ENCODE measurements at regions of chr7 and their contacts with region 1.

Region 1: DNA sequence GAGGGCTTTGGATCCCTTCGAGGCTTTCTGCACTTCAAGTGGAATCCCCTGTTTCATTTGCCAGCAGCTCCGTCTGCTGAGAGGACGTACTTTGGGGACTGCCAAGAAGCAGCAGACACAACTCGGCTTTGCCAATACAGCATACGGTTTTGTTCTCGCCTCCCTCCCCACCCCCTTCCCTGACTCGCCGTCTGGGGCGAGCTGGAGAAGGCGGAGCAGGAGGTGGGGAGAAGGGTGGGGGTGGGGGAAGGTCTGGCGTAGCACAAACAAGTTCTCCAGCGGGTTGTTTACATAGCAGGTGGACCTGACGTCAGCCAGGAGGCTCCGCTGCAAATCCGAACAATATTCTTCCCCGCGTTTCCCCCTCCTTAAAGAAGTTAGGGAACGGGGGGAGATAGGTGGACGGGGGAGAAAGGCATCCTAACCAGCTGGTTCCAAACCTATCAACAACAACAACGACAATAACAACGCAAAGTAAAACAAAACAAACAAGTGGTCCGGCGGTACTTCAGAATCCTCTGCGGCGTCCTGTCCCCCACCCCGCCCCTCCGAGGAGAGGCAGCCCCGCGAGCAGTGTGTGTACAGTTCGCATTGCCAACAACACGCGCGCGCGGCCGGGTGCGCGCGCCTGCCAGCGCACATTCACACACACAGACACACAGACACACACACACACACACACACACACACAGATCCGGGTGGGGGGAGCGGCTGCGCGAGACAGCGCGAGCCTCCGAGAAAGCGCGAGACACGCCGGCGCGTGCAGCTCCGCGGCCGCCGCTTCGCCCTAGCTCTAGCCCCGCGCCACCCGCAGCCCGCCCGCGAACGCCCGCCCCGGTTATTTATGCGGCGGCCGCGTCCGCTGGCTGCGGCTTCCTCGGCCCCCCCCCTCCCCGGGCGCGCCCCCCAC is 167.0 kb upstream of the PPP1R3A start:
- DNase-seq: peak; percentile 40
- H3K4me3 Mint-ChIP-seq: peak overlapping the region; percentile 76
- H3K27ac Mint-ChIP-seq: no peak overlapping the region
- H3K4me1 Mint-ChIP-seq: peaks cover 40% of the 10 kb centered on the region
- H3K27me3 Mint-ChIP-seq: peaks cover 64% of the 10 kb centered on the region

Region 2: DNA sequence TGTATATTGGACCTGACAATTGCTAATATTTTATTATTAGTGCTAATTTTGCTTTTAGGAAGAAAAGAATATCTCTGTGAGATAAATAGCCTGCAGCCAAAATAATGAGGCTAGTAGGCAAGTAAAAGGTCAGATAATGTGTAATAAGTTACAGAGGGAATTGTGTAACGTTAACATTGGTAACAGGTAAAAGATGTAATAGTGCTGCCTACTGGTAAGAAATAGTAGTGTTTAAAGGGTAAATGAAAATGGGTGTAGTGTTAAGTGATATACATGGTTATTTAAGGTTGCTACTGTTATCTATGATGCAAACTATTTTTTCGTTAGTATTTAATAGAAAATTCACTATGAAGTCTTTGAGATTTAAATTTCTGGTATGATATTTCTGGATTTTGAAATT is 319.6 kb after region 1 on chr7:
- CTCF ChIA-PET with region 1: no interaction called
- intact Hi-C with region 1: loop called (anchors 1 kb)
- DNase-seq: no peak
- H3K4me3 Mint-ChIP-seq: no peak overlapping the region
- H3K27ac Mint-ChIP-seq: no peak overlapping the region
- H3K4me1 Mint-ChIP-seq: no peaks in the 10 kb centered on the region
- H3K27me3 Mint-ChIP-seq: no peaks in the 10 kb centered on the region

Region 3: GRCh38 chr7:114799628-114800028 is 713.8 kb after region 1 on chr7:
- CTCF ChIA-PET with region 1: no interaction called
- intact Hi-C with region 1: loop called (anchors 5 kb)
- DNase-seq: peak; percentile 39
- H3K4me3 Mint-ChIP-seq: no peak overlapping the region
- H3K27ac Mint-ChIP-seq: peak overlapping the region; percentile 81
- H3K4me1 Mint-ChIP-seq: peaks cover 70% of the 10 kb centered on the region
- H3K27me3 Mint-ChIP-seq: peaks cover 13% of the 10 kb centered on the region

Region 4: GRCh38 chr7:115217373-115217772 is 1131.5 kb after region 1 on chr7:
- CTCF ChIA-PET with region 1: no interaction called
- intact Hi-C with region 1: loop called (anchors 2 kb)
- DNase-seq: no peak
- H3K4me3 Mint-ChIP-seq: no peak overlapping the region
- H3K27ac Mint-ChIP-seq: no peak overlapping the region
- H3K4me1 Mint-ChIP-seq: peaks cover 10% of the 10 kb centered on the region
- H3K27me3 Mint-ChIP-seq: no peaks in the 10 kb centered on the region

Region 5: DNA sequence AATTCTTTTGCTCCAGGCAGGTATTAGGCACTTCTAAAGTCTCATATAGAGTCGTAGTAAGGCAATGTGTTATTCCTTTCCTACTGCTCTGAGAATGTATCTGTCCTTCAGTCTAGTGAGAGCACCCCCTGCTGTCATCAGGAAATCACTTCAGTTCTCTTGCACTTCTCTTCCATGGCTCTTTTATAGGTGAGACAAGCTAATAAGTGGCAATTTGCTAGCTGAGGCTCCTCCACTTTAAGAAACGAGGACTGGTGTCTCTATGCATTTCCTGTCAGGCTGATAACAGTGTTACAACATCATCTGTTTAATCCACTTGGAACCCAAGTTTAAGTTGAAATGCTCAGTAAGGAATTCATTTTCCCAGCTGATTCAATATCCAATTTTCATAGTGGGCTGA is 1594.1 kb after region 1 on chr7:
- CTCF ChIA-PET with region 1: no interaction called
- intact Hi-C with region 1: loop called (anchors 1 kb)
- DNase-seq: peak; percentile 6
- H3K4me3 Mint-ChIP-seq: no peak overlapping the region
- H3K27ac Mint-ChIP-seq: no peak overlapping the region
- H3K4me1 Mint-ChIP-seq: no peaks in the 10 kb centered on the region
- H3K27me3 Mint-ChIP-seq: no peaks in the 10 kb centered on the region

Region 6: GRCh38 chr7:115851291-115851690 is 1765.4 kb after region 1 on chr7:
- CTCF ChIA-PET with region 1: interaction called, 3 read pairs
- intact Hi-C with region 1: loop called (anchors 1 kb)
- DNase-seq: no peak
- H3K4me3 Mint-ChIP-seq: no peak overlapping the region
- H3K27ac Mint-ChIP-seq: no peak overlapping the region
- H3K4me1 Mint-ChIP-seq: no peaks in the 10 kb centered on the region
- H3K27me3 Mint-ChIP-seq: no peaks in the 10 kb centered on the region

Measured in activated naive CD4-positive, alpha-beta T cell treated with anti-CD3 and anti-CD28 coated beads for 36 hours (primary cell).